Ovary (tissue), 10 donors: ENCODE measurements at regions of chr6 and their contacts with region 1.

Region 1: DNA sequence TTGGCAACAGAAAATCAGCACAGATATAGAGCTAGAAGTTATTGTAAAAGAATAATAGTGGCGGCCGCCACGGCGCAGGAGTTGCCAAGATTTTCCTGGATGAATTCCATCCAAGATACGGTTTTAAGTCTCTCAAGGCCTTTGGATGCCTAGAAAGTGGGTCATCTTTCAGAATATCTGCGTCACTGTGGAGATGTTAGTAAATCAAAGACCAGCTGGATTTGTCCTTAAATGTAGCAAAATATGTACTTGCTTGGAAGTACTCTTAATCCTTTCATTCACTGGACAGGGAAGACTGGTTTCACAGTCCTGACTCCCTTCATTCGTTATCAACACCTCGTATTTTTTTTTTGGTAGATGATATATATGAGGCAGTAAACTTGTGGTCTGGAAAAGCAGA is 83.0 kb downstream of the SLC22A3 start:
- DNase-seq: peak; percentile 78 to 91 (median 84)
- H3K4me3 ChIP-seq: no peak overlapping the region
- H3K27ac ChIP-seq: peak overlapping the region in 1 of 2 donors; percentile 86
- H3K4me1 ChIP-seq: peaks cover 27% of the 10 kb centered on the region
- H3K27me3 ChIP-seq: no peaks in the 10 kb centered on the region
- CTCF ChIP-seq: no peak
- EP300 ChIP-seq: peak; percentile 74
- POLR2A ChIP-seq: no peak

Region 2: DNA sequence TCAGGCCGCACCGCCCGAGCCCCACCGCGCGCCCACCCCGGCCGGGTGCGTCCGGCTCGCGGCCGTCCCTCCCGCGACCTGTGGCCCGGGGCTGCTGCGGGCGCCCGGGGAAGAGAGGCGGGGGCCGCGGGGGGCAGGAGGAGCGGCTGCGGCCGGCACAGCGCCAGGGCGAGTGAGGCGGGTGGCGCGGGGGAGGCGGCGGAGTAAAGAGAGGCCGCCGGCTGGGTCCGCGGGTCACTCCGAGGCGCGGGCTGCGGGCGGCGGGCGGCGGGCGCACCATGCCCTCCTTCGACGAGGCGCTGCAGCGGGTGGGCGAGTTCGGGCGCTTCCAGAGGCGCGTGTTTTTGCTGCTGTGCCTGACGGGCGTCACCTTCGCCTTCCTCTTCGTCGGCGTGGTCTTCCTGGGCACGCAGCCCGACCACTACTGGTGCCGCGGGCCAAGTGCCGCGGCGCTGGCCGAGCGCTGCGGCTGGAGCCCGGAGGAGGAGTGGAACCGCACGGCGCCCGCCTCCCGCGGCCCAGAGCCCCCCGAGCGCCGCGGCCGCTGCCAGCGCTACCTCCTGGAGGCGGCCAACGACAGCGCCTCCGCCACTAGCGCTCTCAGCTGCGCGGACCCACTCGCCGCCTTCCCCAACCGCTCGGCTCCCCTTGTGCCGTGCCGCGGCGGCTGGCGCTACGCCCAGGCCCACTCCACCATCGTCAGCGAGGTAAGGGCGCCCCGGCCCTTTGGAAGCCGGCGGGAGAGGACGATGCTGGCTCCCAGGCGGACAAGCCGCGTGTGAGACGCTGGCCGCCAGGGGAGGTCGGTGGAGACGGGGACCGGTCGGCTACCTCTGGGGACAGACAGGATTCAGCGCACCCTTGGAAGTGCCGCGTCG is 82.8 kb before region 1 on chr6 and contains the start of gene SLC22A3:
- intact Hi-C with region 1: loop called in 2 of 4 experiments (anchors 5 to 10 kb)
- DNase-seq: peak; percentile 70 to 88 (median 82)
- H3K4me3 ChIP-seq: peak within 1 kb of the TSS; percentile 76
- H3K27ac ChIP-seq: peak within 1 kb of the TSS; percentile 62 to 74
- H3K4me1 ChIP-seq: peaks cover 2% of the 10 kb centered on the region
- H3K27me3 ChIP-seq: no peaks in the 10 kb centered on the region
- CTCF ChIP-seq: peak; percentile 4 to 34 (median 18)
- EP300 ChIP-seq: no peak
- POLR2A ChIP-seq: peak; percentile 37
- total RNA-seq, gene SLC22A3: 18.9 to 42.5 (median 30.5) TPM

Region 3: DNA sequence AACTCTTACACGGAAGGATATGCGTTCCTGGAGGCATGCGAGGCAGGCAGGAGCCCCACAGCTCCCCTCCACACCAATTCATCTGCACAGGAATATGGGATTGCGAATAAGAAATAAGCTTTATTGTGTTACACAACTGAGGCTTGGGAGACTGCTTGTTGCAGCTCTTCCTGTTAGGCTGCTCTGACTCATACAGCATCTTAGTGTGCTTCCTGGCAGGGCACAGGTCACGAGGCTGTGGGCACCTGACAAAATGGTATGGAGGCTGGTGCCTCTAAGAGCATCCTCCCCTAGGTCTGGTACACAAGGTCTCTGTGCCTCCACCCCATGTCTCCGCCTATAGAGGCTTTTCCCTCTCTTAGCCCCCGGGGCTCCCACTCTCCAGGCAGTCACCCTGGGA is 76.2 kb before region 1 on chr6:
- intact Hi-C with region 1: loop called in 1 of 4 experiments (anchors 10 kb)
- DNase-seq: no peak
- H3K4me3 ChIP-seq: no peak overlapping the region
- H3K27ac ChIP-seq: no peak overlapping the region
- H3K4me1 ChIP-seq: no peaks in the 10 kb centered on the region
- H3K27me3 ChIP-seq: no peaks in the 10 kb centered on the region
- CTCF ChIP-seq: no peak
- EP300 ChIP-seq: no peak
- POLR2A ChIP-seq: no peak

Region 4: DNA sequence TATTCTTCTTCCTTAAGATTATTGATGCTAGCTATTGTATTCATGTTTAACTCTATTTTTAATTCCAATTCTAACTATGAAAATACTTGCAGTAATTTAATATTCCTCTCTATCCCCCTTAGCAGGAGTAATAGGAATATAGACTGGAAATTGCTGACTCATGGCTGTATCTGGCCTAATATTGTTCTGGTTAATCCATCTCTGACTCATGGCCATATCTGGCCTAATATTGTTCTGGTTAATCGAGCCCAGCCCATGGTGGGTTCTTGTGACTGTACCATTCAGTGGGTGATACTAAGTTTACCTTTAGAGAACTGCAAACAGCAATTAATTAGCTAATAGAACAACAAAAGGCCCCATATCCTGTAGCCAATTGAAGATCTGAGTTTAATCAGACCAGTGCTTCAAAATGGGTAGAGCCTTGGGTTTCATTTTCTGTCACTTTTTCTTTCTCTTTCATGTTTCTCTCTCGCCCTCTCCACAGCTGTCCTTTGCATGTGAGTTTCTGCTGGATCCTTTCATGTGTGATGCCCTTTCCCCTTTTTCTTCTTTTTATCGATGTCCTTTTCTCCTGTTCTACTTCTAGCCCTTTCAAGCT is 32.5 kb before region 1 on chr6:
- intact Hi-C with region 1: no loop called
- DNase-seq: no peak
- H3K4me3 ChIP-seq: no peak overlapping the region
- H3K27ac ChIP-seq: no peak overlapping the region
- H3K4me1 ChIP-seq: peaks cover 2% of the 10 kb centered on the region
- H3K27me3 ChIP-seq: no peaks in the 10 kb centered on the region
- CTCF ChIP-seq: no peak
- EP300 ChIP-seq: no peak
- POLR2A ChIP-seq: no peak